ENCODE measurements at regions of chr4 and their contacts with region 1.

Region 1: GRCh38 chr4:56907489-56908205 is at the start of gene REST:
- DNase-seq: peak; percentile 81
- H3K4me3 Mint-ChIP-seq: peak within 1 kb of the TSS; percentile 84
- H3K27ac Mint-ChIP-seq: peak within 1 kb of the TSS; percentile 78
- H3K4me1 Mint-ChIP-seq: peaks cover 41% of the 10 kb centered on the region
- H3K27me3 Mint-ChIP-seq: peaks cover 10% of the 10 kb centered on the region
- total RNA-seq, gene REST: 52.4 and 60.0 TPM in 2 replicates

Region 2: DNA sequence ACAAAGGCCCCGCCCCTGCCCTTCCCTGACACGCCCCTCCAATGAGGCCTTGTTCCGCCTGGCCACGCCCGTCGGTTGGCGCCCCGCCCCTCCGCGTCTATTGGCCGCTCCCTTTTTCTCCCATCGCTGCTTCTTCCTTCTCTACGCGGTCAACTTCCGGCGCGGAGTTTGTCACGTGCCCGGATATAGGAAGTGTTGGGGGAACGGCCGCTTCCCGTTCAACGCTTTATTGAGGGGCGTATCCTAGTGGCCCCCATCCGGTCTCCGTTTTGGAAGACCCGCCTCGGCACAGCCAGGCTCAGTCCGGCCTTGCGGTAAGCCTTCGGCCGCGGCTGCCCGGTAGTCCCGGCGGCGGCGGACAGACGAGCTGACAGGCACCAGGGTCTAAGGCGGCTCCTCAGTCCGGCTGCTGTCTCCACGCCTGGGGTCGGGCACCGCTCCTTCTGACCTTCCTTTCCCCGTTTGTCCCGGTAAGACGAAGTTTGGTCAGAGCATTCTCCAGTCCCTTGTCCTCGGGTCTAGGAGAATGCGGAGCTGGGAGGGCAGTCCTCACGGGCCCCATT is 1054.1 kb before region 1 on chr4 and contains the start of gene EXOC1:
- intact Hi-C with region 1: loop called (anchors 2 kb)
- DNase-seq: peak; percentile 93
- H3K4me3 Mint-ChIP-seq: peak within 1 kb of the TSS; percentile 37
- H3K27ac Mint-ChIP-seq: peak within 1 kb of the TSS; percentile 53
- H3K4me1 Mint-ChIP-seq: peaks cover 27% of the 10 kb centered on the region
- H3K27me3 Mint-ChIP-seq: peaks cover 2% of the 10 kb centered on the region
- total RNA-seq, gene EXOC1: 18.3 and 18.8 TPM in 2 replicates

Region 3: GRCh38 chr4:56387023-56388001 is 520.3 kb before region 1 on chr4 and contains the start of gene AASDH:
- intact Hi-C with region 1: loop called (anchors 1 kb)
- DNase-seq: peak; percentile 93
- H3K4me3 Mint-ChIP-seq: peak within 1 kb of the TSS; percentile 92
- H3K27ac Mint-ChIP-seq: peak within 1 kb of the TSS; percentile 97
- H3K4me1 Mint-ChIP-seq: peaks cover 26% of the 10 kb centered on the region
- H3K27me3 Mint-ChIP-seq: no peaks in the 10 kb centered on the region
- total RNA-seq, gene AASDH: 9.8 and 12.0 TPM in 2 replicates

Region 4: GRCh38 chr4:56467284-56468096 is 440.2 kb before region 1 on chr4 and contains the start of gene SRP72:
- intact Hi-C with region 1: loop called (anchors 1 kb)
- DNase-seq: peak; percentile 88
- H3K4me3 Mint-ChIP-seq: peak within 1 kb of the TSS; percentile 98
- H3K27ac Mint-ChIP-seq: peak within 1 kb of the TSS; percentile 99
- H3K4me1 Mint-ChIP-seq: peaks cover 60% of the 10 kb centered on the region
- H3K27me3 Mint-ChIP-seq: no peaks in the 10 kb centered on the region
- total RNA-seq, gene SRP72: 199 and 211 TPM in 2 replicates

Region 5: GRCh38 chr4:56843421-56843899 is 64.2 kb before region 1 on chr4:
- intact Hi-C with region 1: loop called (anchors 5 kb)
- DNase-seq: no peak
- H3K4me3 Mint-ChIP-seq: no peak overlapping the region
- H3K27ac Mint-ChIP-seq: no peak overlapping the region
- H3K4me1 Mint-ChIP-seq: no peaks in the 10 kb centered on the region
- H3K27me3 Mint-ChIP-seq: no peaks in the 10 kb centered on the region

Region 6: DNA sequence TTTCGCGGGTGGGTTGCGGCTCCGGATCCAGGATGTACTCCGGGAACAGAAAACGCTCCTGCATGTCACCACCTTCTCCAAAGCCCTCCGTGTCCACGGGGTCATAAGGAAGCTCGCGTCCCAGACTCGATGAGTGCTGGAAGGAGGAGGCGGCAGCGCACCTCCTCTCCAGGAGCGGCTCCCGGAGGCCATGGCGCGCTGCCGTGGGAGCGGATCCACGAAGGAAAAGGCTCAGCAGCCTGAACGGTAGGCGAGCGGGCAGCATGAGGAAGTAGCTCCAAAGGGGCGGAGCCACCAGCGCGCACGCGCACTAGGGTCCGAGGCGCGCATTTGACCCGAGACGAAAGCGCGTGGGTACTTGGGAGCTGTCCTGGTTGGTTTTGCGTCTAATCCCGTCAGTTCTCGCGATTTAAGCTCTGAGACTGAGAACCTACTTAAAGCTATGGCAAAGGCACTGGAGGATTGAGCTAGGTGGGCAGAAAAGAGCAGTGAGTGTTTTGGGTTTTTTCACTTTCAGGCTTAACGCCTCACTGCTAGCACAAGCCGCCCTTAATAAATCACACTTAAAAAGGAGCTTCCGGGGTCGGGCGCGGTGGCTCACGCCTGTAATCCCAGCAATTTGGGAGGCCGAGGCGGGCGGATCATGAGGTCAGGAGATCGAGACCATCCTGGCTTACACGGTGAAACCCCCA is 69.8 kb after region 1 on chr4 and contains the start of gene NOA1:
- intact Hi-C with region 1: loop called (anchors 1 kb)
- DNase-seq: peak; percentile 98
- H3K4me3 Mint-ChIP-seq: peak within 1 kb of the TSS; percentile 100
- H3K27ac Mint-ChIP-seq: peak within 1 kb of the TSS; percentile 100
- H3K4me1 Mint-ChIP-seq: peaks cover 51% of the 10 kb centered on the region
- H3K27me3 Mint-ChIP-seq: no peaks in the 10 kb centered on the region
- total RNA-seq, gene NOA1: 17.7 and 18.3 TPM in 2 replicates

Measured in activated T-helper 1 cell treated with anti-CD3 and anti-CD28 coated beads, Interleukin-12 subunit alpha, Interleukin-12 subunit beta, Interleukin-2, Interleukin-4 antibody, amounts not matched to agents 30 ng/mL and 10 ng/mL and 1 ng/mL, durations not matched to agents 14 hours and 24 hours and 36 hours (primary cell).